Activated CD4-positive, alpha-beta memory T cell treated with anti-CD3 and anti-CD28 coated beads, Interleukin-2, amount 10 ng/mL, durations not matched to agents 7 days and 5 days (primary cell): ENCODE measurements at regions of chr2 and their contacts with region 1.

Region 1: GRCh38 chr2:200829258-200829655 is 17.5 kb downstream of the BZW1 start:
- DNase-seq: no peak
- H3K4me3 Mint-ChIP-seq: no peak overlapping the region
- H3K27ac Mint-ChIP-seq: no peak overlapping the region
- H3K4me1 Mint-ChIP-seq: no peaks in the 10 kb centered on the region
- H3K27me3 Mint-ChIP-seq: no peaks in the 10 kb centered on the region

Region 2: DNA sequence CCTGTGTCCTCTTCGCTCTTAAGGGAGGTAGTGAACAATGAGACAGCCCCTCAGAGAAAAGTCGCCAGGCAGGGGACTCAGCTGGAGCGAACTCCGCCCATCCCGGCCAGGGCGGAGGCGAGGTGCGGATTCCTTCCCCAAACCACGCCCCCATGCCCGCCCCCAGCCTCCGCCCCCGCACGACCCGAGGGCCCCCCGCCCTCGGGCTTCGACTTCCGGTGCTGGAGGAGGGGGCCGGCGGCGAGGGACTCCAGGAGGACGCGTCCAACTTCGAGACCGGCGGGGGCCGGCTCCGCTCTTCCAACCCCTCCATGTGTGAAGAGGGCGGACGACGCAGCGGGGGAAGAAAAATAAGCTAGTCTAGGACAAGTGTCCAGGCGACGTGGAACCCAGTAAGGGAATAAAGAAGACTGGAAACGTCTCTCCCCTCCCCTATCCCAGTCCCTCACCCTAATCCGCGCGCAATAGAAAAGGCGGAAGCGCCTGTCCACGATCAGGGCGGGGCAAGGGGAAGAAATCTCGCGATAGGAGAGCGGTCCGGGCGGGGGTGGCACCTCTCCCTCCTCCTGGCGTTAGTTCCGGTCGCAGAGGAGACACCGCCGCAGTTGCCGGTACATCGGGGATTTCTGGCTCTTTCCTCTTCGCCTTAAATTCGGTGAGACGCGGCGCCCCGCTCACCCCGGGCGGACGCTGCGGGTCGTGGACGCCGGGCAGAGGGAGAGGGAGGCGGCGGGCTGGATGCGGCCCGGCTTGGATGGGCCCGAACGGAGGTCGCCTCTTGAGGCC is 17.7 kb before region 1 on chr2 and contains the start of gene BZW1:
- CTCF ChIA-PET with region 1: interaction called, 5 read pairs
- POLR2A ChIA-PET with region 1: interaction called, 49 read pairs
- DNase-seq: peak; percentile 97
- H3K4me3 Mint-ChIP-seq: peak within 1 kb of the TSS; percentile 99
- H3K27ac Mint-ChIP-seq: peak within 1 kb of the TSS; percentile 97
- H3K4me1 Mint-ChIP-seq: peaks cover 54% of the 10 kb centered on the region
- H3K27me3 Mint-ChIP-seq: no peaks in the 10 kb centered on the region
- total RNA-seq, gene BZW1: 266 to 272 TPM

Region 3: DNA sequence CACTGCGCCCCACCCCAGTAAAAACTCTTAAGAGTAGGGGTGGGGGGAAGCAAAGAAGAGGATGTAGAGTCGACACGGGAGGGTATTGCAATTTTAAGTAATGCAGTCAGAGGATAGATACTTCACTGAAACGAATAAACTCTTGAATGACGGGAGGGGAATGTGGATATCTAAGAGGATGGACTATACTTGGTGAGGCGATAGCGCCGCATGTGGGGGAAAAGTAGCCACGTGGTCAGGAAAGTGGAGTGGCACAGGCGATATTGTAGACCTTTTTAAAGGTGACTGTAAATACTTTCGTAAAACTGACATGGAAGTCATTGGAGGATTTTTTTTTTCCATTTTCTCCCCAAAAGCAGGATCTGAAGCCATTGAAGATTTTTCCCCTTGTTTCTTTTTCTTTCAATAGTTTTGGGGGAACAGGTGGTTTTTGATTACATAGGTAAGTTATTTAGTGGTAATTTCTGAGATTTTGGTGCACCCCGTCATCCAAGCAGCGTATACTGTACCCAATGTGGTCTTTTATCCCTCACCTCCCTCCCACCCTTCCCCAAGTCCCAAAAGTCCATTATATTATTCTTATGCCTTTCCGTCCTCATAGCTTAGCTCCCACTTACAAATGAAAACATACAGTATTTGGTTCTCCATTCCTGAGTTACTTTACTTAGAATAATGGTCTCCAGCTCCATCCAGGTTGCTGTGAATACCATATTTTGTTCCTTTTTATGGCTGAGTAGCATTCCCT is 21.4 kb after region 1 on chr2:
- CTCF ChIA-PET with region 1: no interaction called
- POLR2A ChIA-PET with region 1: interaction called, 15 read pairs
- DNase-seq: no peak
- H3K4me3 Mint-ChIP-seq: no peak overlapping the region
- H3K27ac Mint-ChIP-seq: no peak overlapping the region
- H3K4me1 Mint-ChIP-seq: peaks cover 2% of the 10 kb centered on the region
- H3K27me3 Mint-ChIP-seq: no peaks in the 10 kb centered on the region